ENCODE measurements at regions of chr5 and their contacts with region 1.

Region 1: GRCh38 chr5:97224112-97224750 is 41.2 kb upstream of the RIOK2 start:
- DNase-seq: no peak
- ATAC-seq: no peak
- H3K4me3 ChIP-seq: no peak overlapping the region
- H3K27ac ChIP-seq: no peak overlapping the region
- H3K4me1 ChIP-seq: peaks cover 0 to under 1% (median 0%) of the 10 kb centered on the region in 12 donors
- H3K27me3 ChIP-seq: no peaks in the 10 kb centered on the region
- CTCF ChIP-seq: no peak
- POLR2A ChIP-seq: no peak

Region 2: GRCh38 chr5:98827161-98827560 is 1602.9 kb after region 1 on chr5:
- intact Hi-C with region 1: loop called in 2 of 10 experiments (anchors 10 kb)
- DNase-seq: no peak
- ATAC-seq: peak in 1 of 4 donors; percentile 59
- H3K4me3 ChIP-seq: no peak overlapping the region
- H3K27ac ChIP-seq: no peak overlapping the region
- H3K4me1 ChIP-seq: no peaks in the 10 kb centered on the region
- H3K27me3 ChIP-seq: no peaks in the 10 kb centered on the region
- CTCF ChIP-seq: peak in 11 of 12 donors; percentile 24 to 68 (median 44)
- POLR2A ChIP-seq: no peak

Measured in heart left ventricle (tissue), 16 donors.